ENCODE measurements at regions of chr12 and their contacts with region 1.

Region 1: GRCh38 chr12:7645394-7646177 is 20.1 kb downstream of the APOBEC1 start:
- DNase-seq: no peak
- H3K4me3 ChIP-seq: peak overlapping the region in 1 of 4 experiments; percentile 17; a peak in 1 of 8 replicates
- H3K27ac ChIP-seq: no peak overlapping the region
- H3K4me1 ChIP-seq: peaks cover 6 to 17% (median 13%) of the 10 kb centered on the region in 4 experiments; a peak in 6 of 7 replicates
- H3K27me3 ChIP-seq: no peaks in the 10 kb centered on the region
- CTCF ChIP-seq: peak in 2 of 3 experiments; percentile 35 to 65; a peak in 2 of 4 replicates
- EP300 ChIP-seq: no peak
- POLR2A ChIP-seq: no peak
- RAD21 ChIP-seq: peak in 1 of 2 experiments; percentile 45; a peak in 2 of 4 replicates

Region 2: DNA sequence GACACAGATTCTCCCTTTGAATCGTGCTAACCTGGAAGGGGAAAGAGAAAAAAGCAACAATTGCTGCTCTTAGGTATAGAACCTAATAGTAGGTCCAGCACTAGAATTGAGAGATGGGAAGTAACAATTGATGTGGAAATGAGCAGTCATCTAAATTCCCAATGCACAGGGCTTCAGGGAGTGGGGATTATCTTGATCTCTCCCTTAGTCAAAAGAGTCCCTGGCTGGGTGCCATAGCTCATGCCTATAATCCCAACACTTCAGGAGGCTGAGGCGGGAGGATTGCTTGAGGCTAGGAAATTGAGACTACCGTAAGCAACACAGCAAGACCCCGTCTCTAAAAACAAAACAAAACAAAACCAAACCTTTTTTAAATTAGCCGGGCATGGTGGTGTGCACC is 16.2 kb after region 1 on chr12:
- CTCF ChIA-PET with region 1: interaction called, 27 read pairs
- POLR2A ChIA-PET with region 1: interaction called, 3 read pairs
- DNase-seq: no peak
- H3K4me3 ChIP-seq: no peak overlapping the region
- H3K27ac ChIP-seq: no peak overlapping the region
- H3K4me1 ChIP-seq: no peaks in the 10 kb centered on the region
- H3K27me3 ChIP-seq: no peaks in the 10 kb centered on the region; a peak in 1 of 7 replicates
- CTCF ChIP-seq: no peak
- EP300 ChIP-seq: no peak
- POLR2A ChIP-seq: no peak
- RAD21 ChIP-seq: no peak

Region 3: GRCh38 chr12:7678738-7679137 is 33.2 kb after region 1 on chr12:
- CTCF ChIA-PET with region 1: interaction called, 13 read pairs
- POLR2A ChIA-PET with region 1: no interaction called
- DNase-seq: no peak
- H3K4me3 ChIP-seq: no peak overlapping the region
- H3K27ac ChIP-seq: no peak overlapping the region
- H3K4me1 ChIP-seq: 0 out of 7 replicates have a peak, but pooled peaks cover 0 to 2% (median 0%) of the 10 kb centered on the region in 4 experiments
- H3K27me3 ChIP-seq: no peaks in the 10 kb centered on the region
- CTCF ChIP-seq: no peak
- EP300 ChIP-seq: no peak
- POLR2A ChIP-seq: no peak
- RAD21 ChIP-seq: no peak

Region 4: GRCh38 chr12:7797698-7798398 is 152.3 kb after region 1 on chr12:
- CTCF ChIA-PET with region 1: interaction called, 10 read pairs
- POLR2A ChIA-PET with region 1: interaction called, 5 read pairs
- DNase-seq: no peak
- H3K4me3 ChIP-seq: peak overlapping the region in 1 of 4 experiments; percentile 44; a peak in 1 of 8 replicates
- H3K27ac ChIP-seq: peak overlapping the region; percentile 69; the same call in 1 of the 2 replicates
- H3K4me1 ChIP-seq: peaks cover 6 to 18% (median 13%) of the 10 kb centered on the region in 4 experiments
- H3K27me3 ChIP-seq: no peaks in the 10 kb centered on the region
- CTCF ChIP-seq: no peak
- EP300 ChIP-seq: no peak
- POLR2A ChIP-seq: no peak
- RAD21 ChIP-seq: no peak

Region 5: GRCh38 chr12:8078398-8078797 is 432.8 kb after region 1 on chr12:
- CTCF ChIA-PET with region 1: interaction called, 16 read pairs
- POLR2A ChIA-PET with region 1: interaction called, 4 read pairs
- DNase-seq: no peak
- H3K4me3 ChIP-seq: no peak overlapping the region
- H3K27ac ChIP-seq: no peak overlapping the region
- H3K4me1 ChIP-seq: 0 out of 7 replicates have a peak, but pooled peaks cover 0 to 3% (median 0%) of the 10 kb centered on the region in 4 experiments
- H3K27me3 ChIP-seq: no peaks in the 10 kb centered on the region
- CTCF ChIP-seq: peak; percentile 22 to 65 (median 47)
- EP300 ChIP-seq: no peak
- POLR2A ChIP-seq: no peak
- RAD21 ChIP-seq: peak; percentile 79 to 81